Panc1 (cell line): ENCODE measurements at regions of chr22 and their contacts with region 1.

Region 1: GRCh38 chr22:31561238-31561887 is 65.0 kb downstream of the SFI1 start:
- DNase-seq: peak; percentile 36
- ATAC-seq: peak; percentile 98
- H3K4me3 ChIP-seq: no peak overlapping the region
- H3K27ac ChIP-seq: no peak overlapping the region
- H3K4me1 ChIP-seq: no peaks in the 10 kb centered on the region
- H3K27me3 ChIP-seq: no peaks in the 10 kb centered on the region
- CTCF ChIP-seq: peak; percentile 85

Region 2: DNA sequence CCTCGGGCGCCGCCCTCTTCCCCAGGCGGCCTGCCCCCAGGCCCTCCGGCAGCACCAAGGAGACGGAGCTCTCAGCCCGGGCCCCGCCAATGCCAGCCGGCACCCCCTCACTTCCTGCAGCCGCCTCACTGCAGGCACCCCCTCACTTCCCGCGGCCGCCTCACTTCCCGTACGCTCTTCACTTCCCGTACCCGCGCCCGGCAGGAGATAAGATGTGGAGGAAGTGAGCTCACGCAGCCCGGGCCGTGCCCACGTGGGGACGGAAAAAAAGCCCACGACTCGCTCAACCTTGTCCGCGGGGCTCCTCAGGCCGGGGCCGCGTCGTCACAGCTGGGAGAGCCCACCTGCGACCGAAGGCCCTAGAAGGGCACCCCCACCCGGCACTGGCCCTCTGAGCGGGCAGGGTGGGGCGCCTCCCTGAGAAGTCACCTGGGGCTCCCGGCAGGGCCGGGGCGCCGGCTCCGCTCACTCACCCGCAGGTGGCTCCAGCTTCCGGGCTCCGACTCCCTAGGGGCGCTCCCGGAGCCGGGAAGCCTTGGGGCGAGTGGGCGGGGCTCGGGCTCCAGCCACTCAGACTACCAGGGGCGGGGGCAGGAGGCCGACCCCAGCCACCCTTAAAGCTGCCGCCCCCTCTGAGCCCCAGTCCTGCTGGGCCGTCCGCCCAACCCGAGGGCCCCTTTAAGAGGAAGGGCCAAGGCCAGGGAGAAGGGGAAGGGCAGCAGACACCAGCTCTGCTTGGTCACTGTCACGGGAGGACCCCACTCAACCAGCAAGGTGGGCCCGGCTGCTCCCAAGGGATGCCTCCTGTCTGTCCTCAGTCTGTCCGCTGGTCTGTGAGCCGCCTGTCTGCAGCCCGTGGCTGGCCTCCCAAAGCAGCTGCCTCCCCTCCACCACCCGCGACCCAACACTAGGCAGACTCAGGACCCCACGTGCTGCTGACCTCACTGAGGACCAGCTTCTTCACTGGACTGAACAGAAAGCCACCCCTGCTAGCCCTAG is 69.3 kb after region 1 on chr22:
- CTCF ChIA-PET with region 1: no interaction called
- POLR2A ChIA-PET with region 1: no interaction called
- in situ Hi-C with region 1: no loop called
- intact Hi-C with region 1: loop called (anchors 10 kb)
- DNase-seq: no peak
- ATAC-seq: peak; percentile 88
- H3K4me3 ChIP-seq: peak overlapping the region; percentile 67
- H3K27ac ChIP-seq: peak overlapping the region; percentile 69
- H3K4me1 ChIP-seq: peaks cover 12% of the 10 kb centered on the region
- H3K27me3 ChIP-seq: no peaks in the 10 kb centered on the region
- CTCF ChIP-seq: no peak